Activated CD4-positive, alpha-beta T cell treated with anti-CD3 and anti-CD28 coated beads for 36 hours (primary cell): ENCODE measurements at regions of chr3 and their contacts with region 1.

Region 1: DNA sequence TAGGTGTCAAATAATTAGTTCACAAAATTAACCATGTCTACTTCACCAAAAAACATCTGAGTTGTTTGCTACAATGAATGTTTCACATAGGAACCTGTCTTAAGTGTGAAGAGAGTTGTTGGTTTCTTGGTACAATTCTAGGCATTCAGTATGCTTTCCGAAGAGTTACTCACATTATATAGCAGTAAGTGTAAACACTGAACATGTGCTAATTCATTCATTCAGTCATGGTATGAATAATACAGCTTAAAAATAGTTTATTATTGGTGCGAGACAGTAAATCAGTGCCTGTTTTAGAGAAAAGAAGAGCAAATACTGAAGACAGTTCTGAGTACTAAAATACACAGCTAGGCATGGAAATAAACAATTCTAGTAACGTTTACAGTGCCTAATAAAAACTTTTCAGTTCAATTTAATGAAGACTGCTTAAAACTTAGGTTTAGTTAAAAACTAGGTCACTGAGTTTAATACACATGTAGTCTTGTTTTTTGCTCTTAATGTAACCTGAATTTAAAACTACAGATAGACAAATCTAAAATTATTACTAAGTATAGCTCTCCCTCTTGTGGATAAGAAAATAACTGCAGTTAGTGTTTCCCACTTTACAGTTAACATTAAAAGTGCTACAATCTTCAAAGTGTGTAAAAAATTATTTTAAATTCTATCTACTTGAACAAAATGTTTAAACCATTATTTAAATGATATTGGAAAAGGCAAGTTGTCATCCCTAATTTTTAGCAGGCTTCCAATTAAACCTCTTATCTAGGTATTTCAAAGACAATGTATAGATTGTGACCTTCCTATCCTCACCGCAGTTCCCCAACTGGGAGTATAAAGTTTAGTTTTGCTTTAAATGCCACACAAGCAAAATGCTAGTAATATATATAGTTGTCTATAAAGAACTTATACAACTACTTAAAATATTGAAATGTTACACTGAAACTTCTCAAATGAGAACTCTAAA is 20.1 kb upstream of the ZCWPW2 start:
- DNase-seq: no peak
- ATAC-seq: no peak
- H3K4me3 Mint-ChIP-seq: no peak overlapping the region
- H3K27ac Mint-ChIP-seq: no peak overlapping the region
- H3K4me1 Mint-ChIP-seq: peaks cover 14% of the 10 kb centered on the region
- H3K27me3 Mint-ChIP-seq: no peaks in the 10 kb centered on the region

Region 2: GRCh38 chr3:27134165-27134796 is 1194.2 kb before region 1 on chr3:
- CTCF ChIA-PET with region 1: no interaction called
- POLR2A ChIA-PET with region 1: no interaction called
- intact Hi-C with region 1: loop called in 1 of 2 experiments (anchors 10 kb)
- DNase-seq: peak; percentile 75
- ATAC-seq: peak; percentile 60
- H3K4me3 Mint-ChIP-seq: no peak overlapping the region
- H3K27ac Mint-ChIP-seq: no peak overlapping the region
- H3K4me1 Mint-ChIP-seq: no peaks in the 10 kb centered on the region
- H3K27me3 Mint-ChIP-seq: peaks cover 2% of the 10 kb centered on the region

Region 3: DNA sequence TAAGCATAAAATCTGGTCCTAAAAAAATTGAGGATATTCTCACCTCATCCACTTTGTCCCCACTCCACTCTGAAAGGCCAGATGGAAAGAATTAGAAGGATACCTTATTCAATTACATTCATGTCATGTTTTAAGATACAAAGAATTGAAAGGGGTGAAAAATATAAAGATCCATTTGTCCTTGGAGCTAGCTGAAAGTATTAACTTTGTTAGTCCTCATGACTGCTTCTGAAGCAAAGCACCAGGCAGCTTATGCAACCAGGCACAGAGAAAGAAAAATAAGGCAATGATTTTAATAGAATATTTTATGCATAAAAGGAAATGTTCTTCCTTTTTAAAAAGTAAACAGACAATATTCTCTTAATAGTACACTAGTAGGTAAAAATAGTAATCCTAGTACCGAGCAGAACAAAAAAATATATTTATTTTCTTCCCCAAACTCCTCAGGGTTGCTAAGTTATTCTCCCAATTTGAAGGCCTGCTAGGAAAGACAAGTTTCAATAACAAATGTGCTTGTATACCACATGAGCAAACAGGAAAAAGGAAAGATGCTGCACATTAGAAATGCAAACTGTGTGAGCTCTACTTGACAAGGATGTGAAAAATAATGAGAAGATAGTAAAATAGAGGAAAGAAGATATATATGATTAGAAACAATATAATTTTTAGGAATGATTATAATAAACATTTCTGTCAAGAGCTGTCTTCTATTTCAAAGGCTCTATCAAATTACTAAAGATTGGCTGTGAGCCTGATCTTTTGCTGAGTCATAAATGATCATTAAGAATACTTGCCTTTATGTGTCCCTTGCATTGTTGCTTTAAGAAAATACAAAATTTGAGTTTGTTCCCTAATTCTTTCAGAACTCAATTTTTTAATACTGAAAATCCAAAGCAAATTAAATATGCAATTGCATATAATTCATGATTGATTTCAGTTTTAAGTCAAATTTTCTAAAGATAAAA is 1133.7 kb before region 1 on chr3:
- CTCF ChIA-PET with region 1: no interaction called
- POLR2A ChIA-PET with region 1: no interaction called
- intact Hi-C with region 1: no loop called
- DNase-seq: no peak
- ATAC-seq: no peak
- H3K4me3 Mint-ChIP-seq: no peak overlapping the region
- H3K27ac Mint-ChIP-seq: no peak overlapping the region
- H3K4me1 Mint-ChIP-seq: no peaks in the 10 kb centered on the region
- H3K27me3 Mint-ChIP-seq: no peaks in the 10 kb centered on the region

Region 4: GRCh38 chr3:27721717-27722542 is 606.5 kb before region 1 on chr3 and contains the start of gene EOMES:
- CTCF ChIA-PET with region 1: interaction called, 13 read pairs
- POLR2A ChIA-PET with region 1: interaction called, 3 read pairs
- intact Hi-C with region 1: no loop called
- DNase-seq: peak; percentile 82
- ATAC-seq: peak; percentile 74
- H3K4me3 Mint-ChIP-seq: peak within 1 kb of the TSS; percentile 72
- H3K27ac Mint-ChIP-seq: no peak within 1 kb of the TSS
- H3K4me1 Mint-ChIP-seq: peaks cover 22% of the 10 kb centered on the region
- H3K27me3 Mint-ChIP-seq: peaks cover 72% of the 10 kb centered on the region
- total RNA-seq, gene EOMES: 0.25 TPM

Region 5: DNA sequence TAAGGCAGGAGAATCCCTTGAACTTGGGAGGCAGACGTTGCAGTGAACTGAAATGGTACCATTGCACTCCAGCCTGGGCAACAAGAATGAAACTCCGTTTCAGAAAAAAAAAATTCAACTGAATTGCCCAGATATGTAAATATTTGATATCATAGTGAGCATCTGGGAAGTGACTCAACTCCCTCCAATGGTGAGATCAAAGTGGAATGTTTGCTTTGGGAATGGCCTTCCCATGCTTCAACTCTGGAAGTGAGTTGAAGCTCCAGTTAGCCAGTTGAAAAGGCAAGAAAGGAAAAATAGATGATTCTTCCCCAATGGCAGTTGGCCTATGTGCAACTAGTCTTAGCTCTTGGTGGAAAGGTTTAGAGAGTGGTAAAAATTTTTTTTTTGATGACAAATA is 218.6 kb before region 1 on chr3:
- CTCF ChIA-PET with region 1: no interaction called
- POLR2A ChIA-PET with region 1: no interaction called
- intact Hi-C with region 1: no loop called
- DNase-seq: no peak
- ATAC-seq: no peak
- H3K4me3 Mint-ChIP-seq: no peak overlapping the region
- H3K27ac Mint-ChIP-seq: no peak overlapping the region
- H3K4me1 Mint-ChIP-seq: peaks cover under 1% of the 10 kb centered on the region
- H3K27me3 Mint-ChIP-seq: no peaks in the 10 kb centered on the region

Region 6: DNA sequence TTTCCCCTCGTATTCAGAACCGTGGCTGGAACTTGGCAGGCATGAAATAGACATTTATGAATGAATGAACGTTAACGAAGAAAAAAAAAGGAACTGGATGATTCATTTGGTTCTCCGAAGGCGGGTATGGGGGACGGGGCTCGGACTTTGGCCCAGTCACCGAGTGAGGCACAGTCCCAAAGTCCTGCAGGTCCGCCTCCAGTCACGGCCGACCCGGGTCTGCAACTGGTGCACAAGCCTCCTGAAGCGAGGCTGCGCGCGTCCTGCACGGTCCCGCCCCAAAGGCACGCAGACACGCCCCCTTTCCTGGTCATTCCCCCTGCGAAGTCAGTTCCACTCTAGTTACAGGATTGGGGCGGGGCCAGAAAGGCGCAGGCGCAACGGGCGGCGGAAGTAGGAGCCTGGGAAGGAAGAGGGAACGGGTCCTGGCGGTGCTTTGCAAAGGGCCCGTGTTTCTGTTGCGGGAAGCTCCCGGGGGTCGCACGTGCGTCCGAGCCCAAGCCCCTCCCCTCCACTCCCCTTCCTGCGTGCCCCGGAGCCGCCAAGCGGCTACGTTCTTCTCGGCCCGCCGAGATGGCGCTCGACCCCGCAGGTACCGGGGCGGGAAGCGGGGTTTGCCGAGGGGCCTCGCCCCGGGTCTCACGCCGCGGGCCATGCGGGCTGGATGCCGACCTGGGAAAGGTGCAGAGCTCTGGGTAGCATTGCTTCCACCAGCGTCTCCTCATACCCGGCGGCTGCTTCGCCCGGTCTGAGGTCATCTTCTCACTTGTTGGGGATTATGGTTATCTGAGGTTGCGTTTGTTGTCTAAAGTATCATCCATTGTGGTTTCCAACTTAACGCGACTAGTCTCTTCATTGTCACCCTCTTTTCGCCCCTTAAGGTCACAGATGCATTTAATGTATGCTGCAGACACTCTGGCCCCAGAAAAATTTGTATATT is 87.0 kb before region 1 on chr3 and contains the start of gene CMC1:
- CTCF ChIA-PET with region 1: interaction called, 3 read pairs
- POLR2A ChIA-PET with region 1: no interaction called
- intact Hi-C with region 1: loop called in 1 of 2 experiments (anchors 5 kb)
- DNase-seq: peak; percentile 96
- ATAC-seq: peak; percentile 97
- H3K4me3 Mint-ChIP-seq: peak within 1 kb of the TSS; percentile 83
- H3K27ac Mint-ChIP-seq: peak within 1 kb of the TSS; percentile 91
- H3K4me1 Mint-ChIP-seq: peaks cover 45% of the 10 kb centered on the region
- H3K27me3 Mint-ChIP-seq: no peaks in the 10 kb centered on the region
- total RNA-seq, gene CMC1: 21.6 to 28.3 TPM

Region 7: DNA sequence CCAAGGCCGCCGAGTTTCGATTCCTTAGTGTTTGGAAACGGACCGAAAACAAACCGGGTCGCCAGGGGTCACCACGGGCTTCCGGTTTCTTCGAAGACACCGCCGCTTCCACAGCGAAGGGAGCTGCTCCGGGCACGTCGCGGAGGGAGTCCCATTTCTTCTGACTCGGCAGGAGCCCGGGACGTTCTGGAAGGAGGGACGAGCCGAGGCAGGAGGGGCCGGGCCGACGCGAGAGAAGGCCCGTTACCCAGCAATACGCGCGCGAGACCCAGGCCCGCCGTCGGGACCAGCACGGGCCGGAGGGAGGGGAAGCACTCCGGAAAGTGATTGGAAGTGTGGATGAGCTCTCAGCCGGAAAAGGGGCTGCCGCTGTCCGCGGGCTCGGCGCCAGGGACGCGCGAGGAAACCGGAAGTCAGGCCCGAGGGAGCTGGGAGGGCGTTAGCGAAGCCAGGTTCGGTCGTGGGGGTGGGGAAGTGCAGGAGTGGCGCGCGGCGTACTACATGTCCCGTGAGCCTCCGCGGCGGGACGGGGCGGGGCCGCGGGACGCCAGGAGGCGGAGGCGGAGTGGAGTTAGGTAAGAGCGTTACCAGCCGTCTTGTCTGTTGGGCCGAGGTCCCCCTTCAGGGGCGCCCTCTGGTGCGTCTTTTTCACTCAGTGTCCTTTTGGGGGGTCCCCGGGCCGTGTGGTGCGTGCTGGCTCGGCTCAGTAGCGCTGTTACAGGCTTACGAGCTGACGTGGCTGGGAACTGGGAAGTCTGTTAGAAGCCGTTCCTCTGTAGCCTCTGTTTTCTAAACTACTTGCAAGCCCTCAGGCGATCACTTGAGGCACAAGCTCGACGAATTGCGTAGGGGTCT is 20.4 kb after region 1 on chr3 and contains the starts of genes AZI2 and ZCWPW2:
- CTCF ChIA-PET with region 1: interaction called, 15 read pairs
- POLR2A ChIA-PET with region 1: interaction called, 12 read pairs
- intact Hi-C with region 1: loop called (anchors 1 to 2 kb)
- DNase-seq: peak; percentile 96
- ATAC-seq: peak; percentile 87
- H3K4me3 Mint-ChIP-seq: peak within 1 kb of the TSS; percentile 98
- H3K27ac Mint-ChIP-seq: peak within 1 kb of the TSS; percentile 98
- H3K4me1 Mint-ChIP-seq: peaks cover 43% of the 10 kb centered on the region
- H3K27me3 Mint-ChIP-seq: no peaks in the 10 kb centered on the region
- total RNA-seq, gene AZI2: 52.3 to 78.8 TPM
- total RNA-seq, gene ZCWPW2: 0.37 to 0.39 TPM